CD8-positive, alpha-beta memory T cell (primary cell): ENCODE measurements at regions of chr1 and their contacts with region 1.

Region 1: GRCh38 chr1:18902523-18903290 is at the start of gene ALDH4A1:
- DNase-seq: peak; percentile 88 to 96 (median 93)
- H3K4me3 ChIP-seq: peak within 1 kb of the TSS; percentile 83
- H3K4me3 Mint-ChIP-seq: peak within 1 kb of the TSS; percentile 90 to 98 (median 91)
- H3K27ac ChIP-seq: peak within 1 kb of the TSS; percentile 77
- H3K27ac Mint-ChIP-seq: peak within 1 kb of the TSS; percentile 92 to 99 (median 96)
- H3K4me1 ChIP-seq: peaks cover 30% of the 10 kb centered on the region
- H3K4me1 Mint-ChIP-seq: peaks cover 22 to 25% (median 24%) of the 10 kb centered on the region in 3 donors
- H3K27me3 ChIP-seq: no peaks in the 10 kb centered on the region
- H3K27me3 Mint-ChIP-seq: no peaks in the 10 kb centered on the region
- total RNA-seq, gene ALDH4A1: 9.3 to 9.5 TPM

Region 2: DNA sequence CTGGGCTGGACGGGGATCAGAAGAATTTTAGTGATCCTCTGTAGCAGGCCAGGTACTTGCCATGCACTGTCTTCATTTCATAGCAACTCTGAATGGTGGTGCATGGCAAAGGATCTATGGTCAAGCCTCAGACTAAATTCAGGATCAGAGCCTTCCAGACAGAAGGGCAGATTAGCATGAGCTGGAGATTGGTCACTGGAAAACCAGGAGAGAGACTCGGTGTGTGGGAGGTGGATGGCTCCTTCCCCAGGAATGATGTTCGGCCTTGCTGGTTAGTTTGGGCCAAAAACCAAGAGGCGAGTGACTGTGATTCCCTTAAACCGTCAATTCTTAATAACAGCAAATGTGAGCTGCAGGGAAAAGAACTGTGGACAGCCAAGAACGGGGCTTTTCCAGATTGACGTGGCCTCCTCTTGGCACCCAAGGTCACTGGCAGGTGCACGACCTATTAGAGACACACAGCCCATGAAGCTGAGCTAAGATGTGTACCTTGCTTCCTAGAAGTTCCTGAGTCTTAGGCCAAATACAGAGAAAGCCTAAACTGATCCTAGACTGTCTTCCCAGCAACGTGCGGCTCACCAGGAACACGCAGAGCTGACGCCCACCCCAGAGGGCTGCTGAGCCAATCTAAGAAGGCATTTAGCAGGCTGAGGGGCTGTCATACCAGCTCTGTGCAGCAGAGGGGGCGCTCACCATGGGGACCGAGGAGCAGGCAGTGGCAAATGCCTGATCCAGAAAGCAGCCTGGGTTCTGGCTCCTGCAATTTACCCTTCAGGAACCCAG is 18.9 kb before region 1 on chr1:
- CTCF ChIA-PET with region 1: interaction called, 12 read pairs
- POLR2A ChIA-PET with region 1: interaction called, 3 read pairs
- DNase-seq: peak; percentile 50 to 79 (median 60)
- H3K4me3 ChIP-seq: no peak overlapping the region
- H3K4me3 Mint-ChIP-seq: no peak overlapping the region
- H3K27ac ChIP-seq: no peak overlapping the region
- H3K27ac Mint-ChIP-seq: no peak overlapping the region
- H3K4me1 ChIP-seq: no peaks in the 10 kb centered on the region
- H3K4me1 Mint-ChIP-seq: no peaks in the 10 kb centered on the region
- H3K27me3 ChIP-seq: no peaks in the 10 kb centered on the region
- H3K27me3 Mint-ChIP-seq: no peaks in the 10 kb centered on the region

Region 3: GRCh38 chr1:18926315-18927081 is 23.8 kb after region 1 on chr1:
- CTCF ChIA-PET with region 1: interaction called, 33 read pairs
- POLR2A ChIA-PET with region 1: interaction called, 6 read pairs
- DNase-seq: peak; percentile 74 to 91 (median 77)
- H3K4me3 ChIP-seq: peak overlapping the region; percentile 67
- H3K4me3 Mint-ChIP-seq: peak overlapping the region; percentile 76 to 95 (median 82)
- H3K27ac ChIP-seq: peak overlapping the region; percentile 76
- H3K27ac Mint-ChIP-seq: peak overlapping the region; percentile 84 to 99 (median 98)
- H3K4me1 ChIP-seq: peaks cover 86% of the 10 kb centered on the region
- H3K4me1 Mint-ChIP-seq: peaks cover 80 to 97% (median 83%) of the 10 kb centered on the region in 3 donors
- H3K27me3 ChIP-seq: no peaks in the 10 kb centered on the region
- H3K27me3 Mint-ChIP-seq: peaks cover 0 to 4% of the 10 kb centered on the region in 2 donors

Region 4: DNA sequence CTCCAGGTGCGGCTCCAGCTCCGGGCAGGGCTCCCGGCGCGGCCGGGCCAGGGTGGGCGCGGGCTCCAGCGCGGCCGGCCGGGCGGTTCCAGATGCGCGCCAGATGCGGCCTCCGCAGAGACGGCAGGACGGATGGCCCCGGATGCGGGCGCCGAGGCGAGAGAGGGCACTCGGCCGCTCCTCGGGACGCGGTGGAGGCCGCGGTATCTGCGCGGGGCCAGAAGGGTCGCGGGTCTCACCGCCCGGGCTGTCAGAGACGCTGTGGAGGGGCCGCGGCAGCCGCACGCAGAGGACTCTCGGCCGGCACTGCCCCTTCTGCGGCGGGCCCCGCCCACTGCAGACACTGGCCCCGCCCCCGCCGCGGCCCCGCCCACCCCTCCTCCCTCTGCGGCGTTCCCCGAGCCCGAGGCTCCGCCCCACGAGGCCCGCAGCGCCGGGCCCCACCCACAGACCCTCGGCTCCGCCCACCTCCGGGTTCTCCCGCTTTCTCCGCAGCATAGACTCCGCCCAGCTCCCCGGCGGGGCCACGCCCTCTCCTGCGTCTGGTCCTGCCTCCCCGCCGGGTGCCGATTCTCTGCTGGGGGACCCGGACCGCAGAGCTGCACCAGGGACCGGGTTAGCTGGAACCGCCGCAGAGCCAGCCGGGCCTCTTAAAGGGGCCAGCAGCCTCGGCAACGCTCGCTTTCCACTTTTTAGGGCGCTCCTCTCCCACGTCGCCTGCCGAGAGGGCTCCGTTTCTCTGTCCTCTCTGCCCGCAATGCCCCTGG is 53.8 kb after region 1 on chr1 and contains the start of gene IFFO2:
- CTCF ChIA-PET with region 1: interaction called, 21 read pairs
- POLR2A ChIA-PET with region 1: interaction called, 11 read pairs
- DNase-seq: peak; percentile 97 to 100 (median 98)
- H3K4me3 ChIP-seq: peak within 1 kb of the TSS; percentile 69
- H3K4me3 Mint-ChIP-seq: peak within 1 kb of the TSS; percentile 93 to 98 (median 95)
- H3K27ac ChIP-seq: peak within 1 kb of the TSS; percentile 60
- H3K27ac Mint-ChIP-seq: peak within 1 kb of the TSS; percentile 95 to 100 (median 100)
- H3K4me1 ChIP-seq: peaks cover 51% of the 10 kb centered on the region
- H3K4me1 Mint-ChIP-seq: peaks cover 53 to 62% (median 54%) of the 10 kb centered on the region in 3 donors
- H3K27me3 ChIP-seq: no peaks in the 10 kb centered on the region
- H3K27me3 Mint-ChIP-seq: peaks cover 0 to 4% of the 10 kb centered on the region in 2 donors
- total RNA-seq, gene IFFO2: 33.1 to 37.7 TPM

Region 5: GRCh38 chr1:18972531-18972930 is 69.8 kb after region 1 on chr1:
- CTCF ChIA-PET with region 1: interaction called, 87 read pairs
- POLR2A ChIA-PET with region 1: interaction called, 7 read pairs
- DNase-seq: peak in 3 of 5 donors; percentile 46 to 52 (median 47)
- H3K4me3 ChIP-seq: no peak overlapping the region
- H3K4me3 Mint-ChIP-seq: no peak overlapping the region
- H3K27ac ChIP-seq: no peak overlapping the region
- H3K27ac Mint-ChIP-seq: no peak overlapping the region
- H3K4me1 ChIP-seq: no peaks in the 10 kb centered on the region
- H3K4me1 Mint-ChIP-seq: peaks cover 2 to 5% (median 2%) of the 10 kb centered on the region in 3 donors
- H3K27me3 ChIP-seq: no peaks in the 10 kb centered on the region
- H3K27me3 Mint-ChIP-seq: peaks cover 3 to 24% of the 10 kb centered on the region in 2 donors

Region 6: GRCh38 chr1:19096036-19096833 is 193.5 kb after region 1 on chr1:
- CTCF ChIA-PET with region 1: interaction called, 11 read pairs
- POLR2A ChIA-PET with region 1: no interaction called
- DNase-seq: no peak
- H3K4me3 ChIP-seq: no peak overlapping the region
- H3K4me3 Mint-ChIP-seq: no peak overlapping the region
- H3K27ac ChIP-seq: no peak overlapping the region
- H3K27ac Mint-ChIP-seq: peak overlapping the region in 3 of 8 donors; percentile 11 to 23 (median 20)
- H3K4me1 ChIP-seq: no peaks in the 10 kb centered on the region
- H3K4me1 Mint-ChIP-seq: no peaks in the 10 kb centered on the region
- H3K27me3 ChIP-seq: no peaks in the 10 kb centered on the region
- H3K27me3 Mint-ChIP-seq: no peaks in the 10 kb centered on the region